ENCODE measurements at regions of chr4 and their contacts with region 1.

Region 1: DNA sequence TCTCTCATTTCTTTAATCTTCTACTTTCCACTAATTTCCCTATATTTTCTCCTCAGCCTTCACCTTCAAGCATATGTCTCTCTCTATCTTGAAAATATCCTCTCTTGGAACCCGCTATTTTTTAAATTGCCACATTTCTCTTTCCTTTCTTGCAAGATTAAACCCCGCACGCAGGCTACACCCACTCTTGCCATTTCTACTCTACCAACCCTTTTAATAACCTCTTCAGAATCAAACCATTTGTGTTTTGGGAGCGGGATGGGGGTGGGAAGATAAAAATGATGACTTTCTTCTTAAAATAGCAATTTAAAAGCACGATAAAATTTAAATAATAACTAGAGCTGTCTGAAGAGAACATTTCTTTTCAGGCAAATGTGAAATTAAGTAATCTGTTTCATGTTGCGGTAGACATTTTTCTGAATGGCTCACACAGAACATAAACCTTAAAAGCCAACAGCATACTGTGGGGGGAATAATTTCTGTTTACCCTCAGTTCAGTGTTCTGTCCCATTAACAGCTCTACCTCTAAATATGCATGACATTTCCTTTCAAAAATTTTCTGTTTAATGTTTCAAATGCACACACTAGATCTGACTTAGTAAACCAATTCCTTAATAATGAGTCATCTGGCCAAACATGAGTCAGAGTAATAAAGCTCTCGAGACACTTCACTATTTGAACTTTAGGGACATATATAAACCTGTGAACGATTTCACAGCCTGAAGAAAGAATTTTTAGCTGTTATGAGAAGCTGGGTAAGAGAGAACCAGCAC is 20.5 kb downstream of the ARSJ start:
- DNase-seq: peak in 1 of 2 experiments; percentile 60
- H3K4me3 ChIP-seq: no peak overlapping the region; the same call in 1 of the 2 replicates
- H3K4me3 Mint-ChIP-seq: peak overlapping the region; percentile 39
- H3K27ac Mint-ChIP-seq: peak overlapping the region; percentile 82
- H3K4me1 ChIP-seq: peaks cover 51% of the 10 kb centered on the region
- H3K4me1 Mint-ChIP-seq: peaks cover 58% of the 10 kb centered on the region
- H3K27me3 ChIP-seq: no peaks in the 10 kb centered on the region
- H3K27me3 Mint-ChIP-seq: no peaks in the 10 kb centered on the region
- CTCF ChIP-seq: no peak

Region 2: GRCh38 chr4:113684534-113685091 is 274.3 kb before region 1 on chr4:
- CTCF ChIA-PET with region 1: no interaction called
- POLR2A ChIA-PET with region 1: no interaction called
- intact Hi-C with region 1: no loop called
- DNase-seq: peak; percentile 76 to 89
- H3K4me3 ChIP-seq: no peak overlapping the region
- H3K4me3 Mint-ChIP-seq: no peak overlapping the region
- H3K27ac Mint-ChIP-seq: no peak overlapping the region
- H3K4me1 ChIP-seq: peaks cover 52% of the 10 kb centered on the region
- H3K4me1 Mint-ChIP-seq: peaks cover 47% of the 10 kb centered on the region
- H3K27me3 ChIP-seq: no peaks in the 10 kb centered on the region
- H3K27me3 Mint-ChIP-seq: no peaks in the 10 kb centered on the region
- CTCF ChIP-seq: peak; percentile 31 to 46

Region 3: DNA sequence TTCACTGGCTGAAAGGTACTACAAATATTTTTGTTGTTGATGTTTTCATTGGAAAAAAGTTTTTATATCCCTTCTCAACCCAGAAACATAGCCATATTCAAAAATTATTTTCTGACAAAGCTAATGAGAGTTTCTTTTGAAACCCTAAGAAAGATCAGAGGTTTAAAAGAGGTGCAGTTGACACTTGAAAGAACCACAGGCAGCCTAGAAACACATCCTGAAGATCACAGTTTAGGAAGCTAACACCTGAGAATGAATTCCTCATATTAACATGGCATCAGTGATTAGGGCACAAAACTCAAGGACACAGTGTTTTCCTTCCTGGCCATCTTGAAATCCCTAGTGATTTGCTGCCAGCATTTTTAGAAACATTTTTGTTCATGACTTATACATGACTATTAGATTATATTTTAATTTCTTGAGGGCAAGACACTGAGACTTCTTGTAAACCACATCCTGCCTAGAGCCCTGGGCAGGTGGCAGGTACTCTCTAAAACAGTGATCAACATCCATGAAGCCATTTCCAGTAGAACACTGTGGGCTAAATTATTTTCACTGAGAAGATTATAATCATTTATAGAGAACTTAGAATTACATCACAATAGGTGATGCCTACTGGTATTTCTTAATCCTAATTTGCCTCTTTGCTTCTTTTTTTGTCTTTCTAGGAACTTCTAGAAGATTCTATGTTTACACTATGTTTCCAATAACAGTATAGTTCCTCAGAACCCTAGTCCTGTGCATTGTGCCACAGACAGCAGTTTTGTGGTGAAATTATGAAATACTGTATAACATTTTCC is 59.5 kb before region 1 on chr4:
- CTCF ChIA-PET with region 1: no interaction called
- POLR2A ChIA-PET with region 1: no interaction called
- intact Hi-C with region 1: no loop called
- DNase-seq: no peak
- H3K4me3 ChIP-seq: no peak overlapping the region
- H3K4me3 Mint-ChIP-seq: no peak overlapping the region
- H3K27ac Mint-ChIP-seq: no peak overlapping the region
- H3K4me1 ChIP-seq: peaks cover 9% of the 10 kb centered on the region
- H3K4me1 Mint-ChIP-seq: peaks cover 9% of the 10 kb centered on the region
- H3K27me3 ChIP-seq: no peaks in the 10 kb centered on the region
- H3K27me3 Mint-ChIP-seq: no peaks in the 10 kb centered on the region
- CTCF ChIP-seq: no peak

Region 4: DNA sequence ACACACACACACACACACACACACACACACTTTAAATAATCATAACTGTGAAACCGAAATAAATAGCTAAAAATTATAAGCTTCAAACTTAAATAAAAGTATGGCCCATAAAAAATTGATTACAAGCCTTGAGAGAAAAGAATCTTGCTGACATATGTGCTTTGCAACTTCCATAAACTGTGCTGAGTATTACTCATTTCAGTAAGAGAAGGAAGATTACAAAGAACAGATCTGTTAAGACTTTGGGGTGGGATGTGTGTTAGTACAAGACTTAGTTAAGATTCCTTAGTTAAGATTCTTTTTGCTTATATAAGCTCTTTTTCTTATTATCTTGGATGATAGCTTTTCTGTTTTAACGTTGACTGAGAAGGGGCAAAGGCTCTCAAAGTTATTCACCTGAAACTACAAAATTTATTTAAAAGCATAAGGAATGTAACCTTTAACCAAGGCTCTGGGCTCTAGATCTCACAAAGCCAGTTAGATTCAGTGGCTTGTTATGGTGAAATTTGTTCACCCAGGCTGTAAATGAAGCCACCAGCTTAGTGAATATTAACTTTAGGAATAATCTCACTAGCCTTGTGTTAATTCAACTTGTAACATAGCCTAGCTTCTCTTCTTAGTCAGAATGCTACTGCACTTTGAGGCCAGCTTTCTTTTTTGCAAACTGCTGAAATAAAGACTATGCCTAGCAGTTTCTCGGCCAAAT is 37.7 kb before region 1 on chr4:
- CTCF ChIA-PET with region 1: no interaction called
- POLR2A ChIA-PET with region 1: no interaction called
- intact Hi-C with region 1: loop called (anchors 1 kb)
- DNase-seq: peak in 1 of 2 experiments; percentile 10
- H3K4me3 ChIP-seq: no peak overlapping the region
- H3K4me3 Mint-ChIP-seq: no peak overlapping the region
- H3K27ac Mint-ChIP-seq: peak overlapping the region; percentile 34
- H3K4me1 ChIP-seq: peaks cover 25% of the 10 kb centered on the region
- H3K4me1 Mint-ChIP-seq: peaks cover 7% of the 10 kb centered on the region
- H3K27me3 ChIP-seq: no peaks in the 10 kb centered on the region
- H3K27me3 Mint-ChIP-seq: no peaks in the 10 kb centered on the region
- CTCF ChIP-seq: no peak

Region 5: GRCh38 chr4:113979148-113979904 is 20.4 kb after region 1 on chr4 and contains the start of gene ARSJ:
- CTCF ChIA-PET with region 1: no interaction called
- POLR2A ChIA-PET with region 1: no interaction called
- intact Hi-C with region 1: loop called (anchors 1 kb)
- DNase-seq: peak; percentile 52 to 69
- H3K4me3 ChIP-seq: peak within 1 kb of the TSS; percentile 54
- H3K4me3 Mint-ChIP-seq: peak within 1 kb of the TSS; percentile 74
- H3K27ac Mint-ChIP-seq: peak within 1 kb of the TSS; percentile 51
- H3K4me1 ChIP-seq: no peaks in the 10 kb centered on the region
- H3K4me1 Mint-ChIP-seq: no peaks in the 10 kb centered on the region
- H3K27me3 ChIP-seq: no peaks in the 10 kb centered on the region
- H3K27me3 Mint-ChIP-seq: no peaks in the 10 kb centered on the region
- CTCF ChIP-seq: no peak
- total RNA-seq, gene ARSJ: 7.3 and 10.1 TPM in 2 replicates

Region 6: GRCh38 chr4:114103908-114104307 is 145.0 kb after region 1 on chr4:
- CTCF ChIA-PET with region 1: no interaction called
- POLR2A ChIA-PET with region 1: no interaction called
- intact Hi-C with region 1: no loop called
- DNase-seq: no peak
- H3K4me3 ChIP-seq: no peak overlapping the region
- H3K4me3 Mint-ChIP-seq: no peak overlapping the region
- H3K27ac Mint-ChIP-seq: no peak overlapping the region
- H3K4me1 ChIP-seq: no peaks in the 10 kb centered on the region
- H3K4me1 Mint-ChIP-seq: no peaks in the 10 kb centered on the region
- H3K27me3 ChIP-seq: no peaks in the 10 kb centered on the region
- H3K27me3 Mint-ChIP-seq: no peaks in the 10 kb centered on the region
- CTCF ChIP-seq: no peak

Region 7: GRCh38 chr4:114187611-114188010 is 228.7 kb after region 1 on chr4:
- CTCF ChIA-PET with region 1: no interaction called
- POLR2A ChIA-PET with region 1: no interaction called
- intact Hi-C with region 1: loop called (anchors 5 kb)
- DNase-seq: peak; percentile 29 to 34
- H3K4me3 ChIP-seq: no peak overlapping the region
- H3K4me3 Mint-ChIP-seq: no peak overlapping the region
- H3K27ac Mint-ChIP-seq: no peak overlapping the region
- H3K4me1 ChIP-seq: peaks cover 20% of the 10 kb centered on the region
- H3K4me1 Mint-ChIP-seq: peaks cover 6% of the 10 kb centered on the region
- H3K27me3 ChIP-seq: no peaks in the 10 kb centered on the region
- H3K27me3 Mint-ChIP-seq: no peaks in the 10 kb centered on the region
- CTCF ChIP-seq: no peak

Measured in Caco-2 (cell line).